ENCODE measurements at regions of chr20 and their contacts with region 1.

Region 1: GRCh38 chr20:21559305-21559704 is 45.4 kb upstream of the NKX2-2 start:
- DNase-seq: peak; percentile 77
- H3K4me3 Mint-ChIP-seq: peak overlapping the region; percentile 50
- H3K27ac Mint-ChIP-seq: peak overlapping the region; percentile 75
- H3K4me1 Mint-ChIP-seq: peaks cover 54% of the 10 kb centered on the region
- H3K27me3 Mint-ChIP-seq: peaks cover 4% of the 10 kb centered on the region

Region 2: DNA sequence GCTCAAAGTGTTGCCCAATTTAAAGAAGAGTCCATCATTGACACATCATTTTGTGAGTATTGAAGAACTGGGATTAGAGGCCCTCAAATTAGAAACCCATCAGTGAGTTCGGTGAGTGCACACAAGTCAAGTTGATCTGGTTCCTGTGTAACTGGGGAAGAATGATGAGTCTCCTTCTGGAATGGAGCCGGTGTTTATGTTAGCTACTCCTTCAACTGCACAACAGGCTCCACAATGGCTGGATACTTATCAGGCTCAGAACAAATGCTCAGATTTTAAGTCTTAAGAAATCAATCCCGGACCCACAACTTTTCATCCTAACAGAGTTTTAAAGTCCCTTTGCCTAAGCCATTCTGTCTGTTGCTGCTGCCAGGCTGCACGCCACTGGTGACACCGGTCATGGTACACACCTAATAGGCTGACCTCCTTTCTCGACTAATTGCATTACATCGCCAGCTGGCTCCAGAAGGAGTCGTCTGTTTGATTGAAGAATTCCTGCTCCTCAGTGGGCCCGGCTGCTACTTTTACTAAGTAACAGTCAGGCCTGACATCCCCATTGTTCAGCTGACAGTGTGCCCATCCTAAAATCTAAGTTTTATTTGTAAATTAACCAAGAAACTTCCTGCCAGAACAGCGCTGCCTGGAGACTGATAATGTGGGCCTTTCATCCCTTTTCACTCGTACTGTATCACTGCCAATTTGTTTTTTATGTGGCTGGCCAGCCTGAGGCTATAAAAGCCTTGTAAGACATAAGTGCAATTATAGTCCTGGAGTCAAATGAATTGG is 1061.0 kb before region 1 on chr20:
- CTCF ChIA-PET with region 1: no interaction called
- POLR2A ChIA-PET with region 1: no interaction called
- intact Hi-C with region 1: loop called (anchors 5 kb)
- DNase-seq: no peak
- H3K4me3 Mint-ChIP-seq: no peak overlapping the region
- H3K27ac Mint-ChIP-seq: peak overlapping the region; percentile 84
- H3K4me1 Mint-ChIP-seq: peaks cover 62% of the 10 kb centered on the region
- H3K27me3 Mint-ChIP-seq: no peaks in the 10 kb centered on the region

Region 3: DNA sequence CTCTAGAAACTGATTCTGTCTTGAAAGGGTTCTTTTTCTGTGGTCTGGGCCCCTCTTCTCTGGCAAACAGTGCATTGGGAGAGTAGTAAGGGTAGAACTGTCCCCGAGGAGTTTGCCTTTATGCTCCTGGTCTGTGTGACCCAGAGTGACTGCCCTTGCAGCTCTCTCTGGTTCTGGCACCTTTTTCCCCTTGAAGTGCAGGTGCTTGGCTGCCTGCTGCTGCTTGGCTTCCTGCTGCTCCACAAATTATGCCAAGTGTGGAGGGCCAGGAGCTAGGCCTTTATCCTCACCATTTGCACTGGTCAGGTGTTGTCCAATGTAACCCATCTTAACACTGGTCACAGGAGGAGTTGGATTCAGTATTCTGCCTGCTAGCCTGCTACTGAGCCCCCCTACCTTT is 422.2 kb before region 1 on chr20:
- CTCF ChIA-PET with region 1: no interaction called
- POLR2A ChIA-PET with region 1: no interaction called
- intact Hi-C with region 1: no loop called
- DNase-seq: no peak
- H3K4me3 Mint-ChIP-seq: no peak overlapping the region
- H3K27ac Mint-ChIP-seq: no peak overlapping the region
- H3K4me1 Mint-ChIP-seq: no peaks in the 10 kb centered on the region
- H3K27me3 Mint-ChIP-seq: no peaks in the 10 kb centered on the region

Region 4: GRCh38 chr20:21303061-21303871 is 256.0 kb before region 1 on chr20 and contains the start of gene XRN2:
- CTCF ChIA-PET with region 1: no interaction called
- POLR2A ChIA-PET with region 1: interaction called, 3 read pairs
- intact Hi-C with region 1: loop called (anchors 5 kb)
- DNase-seq: peak; percentile 97
- H3K4me3 Mint-ChIP-seq: peak within 1 kb of the TSS; percentile 93
- H3K27ac Mint-ChIP-seq: peak within 1 kb of the TSS; percentile 99
- H3K4me1 Mint-ChIP-seq: peaks cover 34% of the 10 kb centered on the region
- H3K27me3 Mint-ChIP-seq: no peaks in the 10 kb centered on the region
- total RNA-seq, gene XRN2: 91.0 to 94.4 TPM

Region 5: DNA sequence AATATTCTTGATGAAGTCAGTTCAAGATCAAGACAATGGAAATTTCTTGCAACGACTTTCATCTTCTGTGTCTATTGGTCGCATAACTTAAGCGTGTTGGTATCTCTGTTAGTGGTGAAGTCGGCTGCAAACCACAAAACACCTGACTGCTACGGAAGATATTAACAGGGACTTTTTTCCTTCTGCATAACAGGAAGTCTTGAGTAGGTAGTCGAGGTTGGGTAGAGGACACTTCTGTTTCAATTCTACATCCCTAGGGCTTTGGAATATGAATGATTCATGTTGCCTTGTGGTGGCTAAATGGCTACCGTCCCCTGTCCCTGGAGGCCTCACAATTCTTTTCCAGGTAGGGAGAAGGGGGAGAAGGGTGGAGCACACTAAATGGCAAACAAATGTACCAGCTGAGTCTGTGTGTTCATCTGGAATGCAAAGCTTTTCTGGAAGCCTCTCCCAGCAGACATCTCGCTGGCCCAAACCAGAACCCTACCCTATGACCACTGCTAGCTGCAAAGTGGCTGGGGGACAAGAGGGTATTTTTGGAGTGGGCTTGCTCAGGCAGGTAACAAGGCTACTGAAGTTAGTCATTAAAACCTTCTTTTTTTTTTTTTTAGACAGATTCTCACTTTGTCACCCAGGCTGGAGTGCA is 10.8 kb before region 1 on chr20:
- CTCF ChIA-PET with region 1: interaction called, 10 read pairs
- POLR2A ChIA-PET with region 1: interaction called, 4 read pairs
- intact Hi-C with region 1: loop called (anchors 1 kb)
- DNase-seq: peak; percentile 74
- H3K4me3 Mint-ChIP-seq: peak overlapping the region; percentile 24
- H3K27ac Mint-ChIP-seq: peak overlapping the region; percentile 71
- H3K4me1 Mint-ChIP-seq: peaks cover 38% of the 10 kb centered on the region
- H3K27me3 Mint-ChIP-seq: no peaks in the 10 kb centered on the region

Region 6: GRCh38 chr20:23366384-23366783 is 1807.1 kb after region 1 on chr20:
- CTCF ChIA-PET with region 1: no interaction called
- POLR2A ChIA-PET with region 1: no interaction called
- intact Hi-C with region 1: loop called (anchors 5 kb)
- DNase-seq: no peak
- H3K4me3 Mint-ChIP-seq: no peak overlapping the region
- H3K27ac Mint-ChIP-seq: peak overlapping the region; percentile 81
- H3K4me1 Mint-ChIP-seq: peaks cover 50% of the 10 kb centered on the region
- H3K27me3 Mint-ChIP-seq: peaks cover 2% of the 10 kb centered on the region